Activated naive CD4-positive, alpha-beta T cell treated with anti-CD3 and anti-CD28 coated beads for 36 hours (primary cell): ENCODE measurements at regions of chr11 and their contacts with region 1.

Region 1: DNA sequence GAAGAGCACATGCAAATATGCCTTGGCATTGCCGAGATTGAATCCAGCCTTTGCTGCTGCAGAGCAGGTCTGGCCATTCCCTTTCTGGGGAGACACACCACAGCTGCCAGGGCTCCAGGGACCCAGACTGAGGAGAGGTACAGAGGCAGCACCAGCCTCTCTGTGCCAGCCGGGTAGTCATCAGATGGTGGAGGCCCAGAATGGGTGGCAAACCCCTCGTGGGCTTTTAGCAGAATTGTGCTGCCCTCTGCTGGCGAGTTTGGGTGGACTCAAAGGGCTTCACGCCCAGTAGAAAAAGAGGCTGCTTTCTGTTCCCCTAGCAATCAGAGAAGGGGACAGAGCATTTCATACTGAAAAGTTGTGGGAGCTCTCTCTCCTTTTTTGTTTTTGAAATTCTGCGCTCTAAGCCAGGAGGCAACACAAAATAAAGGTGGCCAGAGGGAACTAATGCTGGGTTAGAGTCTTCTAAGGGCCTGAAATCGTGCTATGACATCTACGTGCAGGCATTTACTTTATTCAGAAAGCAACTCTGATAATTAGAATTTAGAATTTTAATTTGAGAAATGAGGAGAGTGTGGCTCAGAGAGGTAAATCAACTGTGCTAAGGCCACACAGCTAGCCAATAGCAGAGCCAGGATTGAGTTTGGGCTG is 158.8 kb upstream of the NAV2 start:
- DNase-seq: peak; percentile 89
- H3K4me3 Mint-ChIP-seq: no peak overlapping the region
- H3K27ac Mint-ChIP-seq: no peak overlapping the region
- H3K4me1 Mint-ChIP-seq: no peaks in the 10 kb centered on the region
- H3K27me3 Mint-ChIP-seq: peaks cover 8% of the 10 kb centered on the region

Region 2: GRCh38 chr11:19160847-19161246 is 393.0 kb before region 1 on chr11:
- CTCF ChIA-PET with region 1: no interaction called
- intact Hi-C with region 1: loop called (anchors 5 kb)
- DNase-seq: no peak
- H3K4me3 Mint-ChIP-seq: no peak overlapping the region
- H3K27ac Mint-ChIP-seq: no peak overlapping the region
- H3K4me1 Mint-ChIP-seq: no peaks in the 10 kb centered on the region
- H3K27me3 Mint-ChIP-seq: no peaks in the 10 kb centered on the region

Region 3: DNA sequence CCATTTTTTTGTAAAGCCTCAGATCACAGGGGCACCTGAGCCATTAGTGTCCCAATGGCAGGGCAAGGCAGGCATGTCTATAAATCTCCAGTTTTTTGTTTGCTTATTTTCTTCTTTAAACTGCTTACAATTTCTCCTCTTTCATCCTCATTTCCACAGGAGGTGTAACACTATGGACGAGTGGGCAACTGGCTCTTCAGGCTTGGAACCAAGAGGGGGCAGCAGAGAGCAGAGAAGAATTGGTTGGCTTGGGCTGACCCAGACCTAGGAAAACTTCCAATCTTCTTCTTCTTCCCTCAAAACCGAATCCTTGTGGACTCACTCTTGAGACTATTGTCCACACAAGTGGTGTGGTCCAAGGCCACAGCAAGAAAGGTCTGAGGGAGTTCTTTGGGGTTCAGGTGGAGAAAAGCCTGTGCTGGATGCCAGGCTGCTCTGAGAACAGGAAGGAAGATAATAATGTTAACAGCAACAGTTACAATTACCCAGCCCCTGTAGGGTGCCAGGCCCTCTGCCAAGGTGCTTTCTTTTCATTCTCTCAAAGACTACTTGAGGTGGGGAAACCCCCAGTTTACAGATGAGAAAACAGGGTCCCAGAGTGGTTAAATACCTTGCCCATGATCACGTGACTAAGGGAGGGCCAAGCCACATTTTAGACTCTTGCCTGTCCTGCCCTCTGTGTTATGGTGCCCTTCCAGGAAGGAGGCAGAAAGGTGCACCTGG is 242.3 kb before region 1 on chr11:
- CTCF ChIA-PET with region 1: interaction called, 4 read pairs
- intact Hi-C with region 1: loop called (anchors 1 kb)
- DNase-seq: peak; percentile 60
- H3K4me3 Mint-ChIP-seq: no peak overlapping the region
- H3K27ac Mint-ChIP-seq: no peak overlapping the region
- H3K4me1 Mint-ChIP-seq: no peaks in the 10 kb centered on the region
- H3K27me3 Mint-ChIP-seq: no peaks in the 10 kb centered on the region

Region 4: GRCh38 chr11:19541454-19542049 is 12.3 kb before region 1 on chr11:
- CTCF ChIA-PET with region 1: interaction called, 11 read pairs
- intact Hi-C with region 1: no loop called
- DNase-seq: no peak
- H3K4me3 Mint-ChIP-seq: no peak overlapping the region
- H3K27ac Mint-ChIP-seq: no peak overlapping the region
- H3K4me1 Mint-ChIP-seq: no peaks in the 10 kb centered on the region
- H3K27me3 Mint-ChIP-seq: peaks cover 3% of the 10 kb centered on the region

Region 5: GRCh38 chr11:19903620-19904069 is 349.8 kb after region 1 on chr11:
- CTCF ChIA-PET with region 1: interaction called, 10 read pairs
- intact Hi-C with region 1: loop called (anchors 1 kb)
- DNase-seq: peak; percentile 76
- H3K4me3 Mint-ChIP-seq: no peak overlapping the region
- H3K27ac Mint-ChIP-seq: no peak overlapping the region
- H3K4me1 Mint-ChIP-seq: no peaks in the 10 kb centered on the region
- H3K27me3 Mint-ChIP-seq: no peaks in the 10 kb centered on the region